Heart left ventricle (tissue), 16 donors: ENCODE measurements at regions of chr2 and their contacts with region 1.

Region 1: DNA sequence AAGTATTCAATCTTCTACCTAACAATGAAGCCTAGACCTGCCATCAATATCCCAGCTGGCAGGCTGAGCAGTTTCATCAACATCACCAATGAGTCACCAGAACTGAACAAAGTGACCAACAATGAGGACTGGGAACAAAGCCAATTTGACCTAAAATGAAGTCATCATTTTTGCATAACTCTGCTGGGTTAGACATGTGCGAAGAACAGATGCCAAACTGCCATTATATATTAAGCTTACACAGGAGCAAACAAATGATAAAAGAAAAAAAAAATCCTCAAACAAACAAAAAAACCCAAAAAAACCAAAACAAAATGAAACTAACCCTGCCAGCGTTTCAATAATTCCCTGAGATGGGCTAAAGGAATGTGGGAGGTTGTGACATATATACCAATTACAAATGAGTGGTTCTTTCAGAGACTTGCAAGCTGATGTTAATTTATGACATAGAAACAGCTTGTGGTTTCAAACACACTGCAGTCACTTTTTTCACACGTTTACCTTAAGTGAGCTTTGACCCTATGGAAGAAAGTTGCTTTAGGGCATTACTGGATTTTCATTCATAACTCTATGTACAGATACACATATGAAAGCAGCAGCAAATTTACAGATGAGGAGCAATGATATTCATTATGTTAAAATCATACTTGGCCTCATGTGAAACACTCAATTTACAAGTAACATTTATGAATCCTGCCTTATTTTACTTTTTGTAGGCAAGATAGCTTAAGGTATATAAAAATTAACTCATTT is 56.9 kb upstream of the CCDC141 start:
- DNase-seq: peak in 4 of 5 donors; percentile 25 to 63 (median 42)
- ATAC-seq: peak; percentile 56 to 90 (median 86)
- H3K4me3 ChIP-seq: no peak overlapping the region
- H3K27ac ChIP-seq: peak overlapping the region in 6 of 12 donors; percentile 5 to 41 (median 15)
- H3K4me1 ChIP-seq: peaks cover 0 to 20% (median 11%) of the 10 kb centered on the region in 12 donors
- H3K27me3 ChIP-seq: no peaks in the 10 kb centered on the region
- CTCF ChIP-seq: no peak
- POLR2A ChIP-seq: no peak

Region 2: DNA sequence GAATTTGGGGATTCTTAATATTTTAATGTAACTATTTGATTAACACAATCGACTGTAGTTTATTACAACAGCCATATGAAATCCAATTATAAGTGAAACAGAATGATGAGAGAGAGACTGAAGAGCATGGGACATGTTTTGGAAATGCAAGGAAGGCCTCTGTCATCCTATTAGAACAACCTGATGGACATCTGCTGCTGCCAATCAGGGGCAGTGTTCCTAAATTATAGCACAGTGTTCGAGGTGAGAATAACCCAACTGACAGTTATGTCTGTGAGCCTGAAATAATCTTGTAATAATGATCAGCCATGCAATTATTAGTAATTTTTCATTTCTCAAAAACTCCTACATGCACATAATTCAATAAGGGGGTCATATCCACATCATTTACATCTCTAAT is 130.5 kb before region 1 on chr2:
- intact Hi-C with region 1: loop called in 1 of 10 experiments (anchors 10 kb)
- DNase-seq: no peak
- ATAC-seq: no peak
- H3K4me3 ChIP-seq: no peak overlapping the region
- H3K27ac ChIP-seq: no peak overlapping the region
- H3K4me1 ChIP-seq: no peaks in the 10 kb centered on the region
- H3K27me3 ChIP-seq: no peaks in the 10 kb centered on the region
- CTCF ChIP-seq: no peak
- POLR2A ChIP-seq: no peak

Region 3: GRCh38 chr2:179049546-179050311 is 57.1 kb before region 1 on chr2 and contains the start of gene CCDC141:
- intact Hi-C with region 1: loop called in 1 of 10 experiments (anchors 10 kb)
- DNase-seq: peak in 4 of 5 donors; percentile 57 to 68 (median 63)
- ATAC-seq: peak; percentile 93 to 95 (median 95)
- H3K4me3 ChIP-seq: peak within 1 kb of the TSS; percentile 10 to 63 (median 51)
- H3K27ac ChIP-seq: peak within 1 kb of the TSS; percentile 65 to 89 (median 72)
- H3K4me1 ChIP-seq: peaks cover 0 to 40% (median 10%) of the 10 kb centered on the region in 12 donors
- H3K27me3 ChIP-seq: no peaks in the 10 kb centered on the region
- CTCF ChIP-seq: no peak
- POLR2A ChIP-seq: peak in 1 of 2 donors; percentile 51
- total RNA-seq, gene CCDC141: 58.1 to 258 (median 144) TPM

Region 4: GRCh38 chr2:179711375-179711774 is 604.5 kb after region 1 on chr2:
- intact Hi-C with region 1: no loop called
- DNase-seq: no peak
- ATAC-seq: no peak
- H3K4me3 ChIP-seq: no peak overlapping the region
- H3K27ac ChIP-seq: no peak overlapping the region
- H3K4me1 ChIP-seq: no peaks in the 10 kb centered on the region
- H3K27me3 ChIP-seq: peaks cover 0 to 4% (median 0%) of the 10 kb centered on the region in 9 donors
- CTCF ChIP-seq: no peak
- POLR2A ChIP-seq: no peak